ENCODE measurements at regions of chr17 and their contacts with region 1.

Region 1: GRCh38 chr17:82551779-82552457 is 32.4 kb downstream of the FOXK2 start:
- DNase-seq: peak; percentile 65 to 70
- ATAC-seq: peak; percentile 68 to 85 (median 76)
- H3K4me3 ChIP-seq: no peak overlapping the region
- H3K27ac ChIP-seq: peak overlapping the region in 7 of 10 donors; percentile 24 to 76 (median 65)
- H3K4me1 ChIP-seq: peaks cover 17 to 76% (median 61%) of the 10 kb centered on the region in 9 donors
- H3K27me3 ChIP-seq: no peaks in the 10 kb centered on the region
- CTCF ChIP-seq: peak; percentile 59 to 82 (median 73)

Region 2: GRCh38 chr17:82457997-82458864 is 93.7 kb before region 1 on chr17 and contains the start of gene NARF:
- intact Hi-C with region 1: loop called in 2 of 10 experiments (anchors 10 kb)
- DNase-seq: peak; percentile 97 to 98
- ATAC-seq: peak; percentile 99
- H3K4me3 ChIP-seq: peak within 1 kb of the TSS; percentile 69 to 99 (median 88)
- H3K27ac ChIP-seq: peak within 1 kb of the TSS; percentile 99 to 100 (median 100)
- H3K4me1 ChIP-seq: peaks cover 10 to 38% (median 32%) of the 10 kb centered on the region in 9 donors
- H3K27me3 ChIP-seq: no peaks in the 10 kb centered on the region
- CTCF ChIP-seq: no peak
- total RNA-seq, gene NARF: 48.4 to 74.8 (median 60.4) TPM

Region 3: DNA sequence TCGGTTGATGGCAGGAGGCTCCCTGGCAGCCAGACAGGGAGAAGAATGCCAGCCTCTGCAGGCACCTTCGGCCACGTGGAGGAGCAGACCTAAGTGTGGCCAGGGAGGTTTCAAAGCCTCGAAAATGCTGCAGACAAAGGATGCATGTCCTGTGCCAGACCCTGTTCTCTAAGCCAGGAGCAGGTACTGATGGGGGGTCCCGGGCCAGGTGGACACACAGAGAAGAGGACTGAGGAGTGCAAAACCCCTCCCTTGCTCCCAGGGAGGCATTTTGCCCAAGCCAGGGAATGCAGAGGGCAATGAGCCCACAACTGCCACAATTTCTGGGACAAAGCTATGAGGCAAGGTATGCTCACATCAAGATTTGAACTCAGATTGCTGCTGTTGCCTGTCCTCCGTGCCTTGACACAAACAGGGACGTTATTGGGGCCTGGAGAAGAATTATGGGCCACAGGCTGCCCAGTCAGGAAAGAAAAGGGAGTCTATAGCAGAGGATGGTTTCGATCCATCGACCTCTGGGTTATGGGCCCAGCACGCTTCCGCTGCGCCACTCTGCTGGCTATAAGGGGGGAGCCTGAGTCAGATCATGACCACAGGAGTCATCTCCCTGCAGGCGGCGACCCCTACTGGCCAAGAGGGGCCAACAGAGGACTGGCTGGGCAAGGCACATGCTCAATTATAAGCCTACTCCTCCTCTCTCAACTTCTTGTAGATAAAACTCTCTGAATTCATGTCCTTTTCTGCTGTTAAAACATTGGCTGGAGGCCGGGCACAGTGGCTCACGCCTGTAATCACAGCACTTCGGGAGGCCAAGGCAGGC is 57.5 kb before region 1 on chr17:
- intact Hi-C with region 1: loop called in 5 of 10 experiments (anchors 5 to 10 kb)
- DNase-seq: peak; percentile 86 to 92
- ATAC-seq: peak; percentile 82 to 92 (median 86)
- H3K4me3 ChIP-seq: peak overlapping the region in 4 of 10 donors; percentile 5 to 19 (median 14)
- H3K27ac ChIP-seq: peak overlapping the region in 7 of 10 donors; percentile 0 to 62 (median 39)
- H3K4me1 ChIP-seq: peaks cover 6 to 31% (median 15%) of the 10 kb centered on the region in 9 donors
- H3K27me3 ChIP-seq: no peaks in the 10 kb centered on the region
- CTCF ChIP-seq: peak; percentile 84 to 97 (median 92)

Region 4: GRCh38 chr17:82518826-82519810 is 32.8 kb before region 1 on chr17 and contains the start of gene FOXK2:
- intact Hi-C with region 1: loop called in 1 of 10 experiments (anchors 5 kb)
- DNase-seq: peak; percentile 91 to 94
- ATAC-seq: peak; percentile 95 to 100 (median 100)
- H3K4me3 ChIP-seq: peak within 1 kb of the TSS; percentile 61 to 96 (median 86)
- H3K27ac ChIP-seq: peak within 1 kb of the TSS; percentile 88 to 100 (median 98)
- H3K4me1 ChIP-seq: peaks cover 0 to 43% (median 32%) of the 10 kb centered on the region in 9 donors
- H3K27me3 ChIP-seq: no peaks in the 10 kb centered on the region
- CTCF ChIP-seq: no peak
- total RNA-seq, gene FOXK2: 27.5 to 66.6 (median 31.0) TPM